OCI-LY7 (cell line): ENCODE measurements at regions of chr17 and their contacts with region 1.

Region 1: GRCh38 chr17:82781894-82782274 is 30.0 kb downstream of the TBCD start:
- DNase-seq: peak; percentile 92
- H3K4me3 ChIP-seq: no peak overlapping the region
- H3K27ac ChIP-seq: peak overlapping the region; percentile 36
- H3K4me1 ChIP-seq: peaks cover 21% of the 10 kb centered on the region
- CTCF ChIP-seq: peak; percentile 100

Region 2: DNA sequence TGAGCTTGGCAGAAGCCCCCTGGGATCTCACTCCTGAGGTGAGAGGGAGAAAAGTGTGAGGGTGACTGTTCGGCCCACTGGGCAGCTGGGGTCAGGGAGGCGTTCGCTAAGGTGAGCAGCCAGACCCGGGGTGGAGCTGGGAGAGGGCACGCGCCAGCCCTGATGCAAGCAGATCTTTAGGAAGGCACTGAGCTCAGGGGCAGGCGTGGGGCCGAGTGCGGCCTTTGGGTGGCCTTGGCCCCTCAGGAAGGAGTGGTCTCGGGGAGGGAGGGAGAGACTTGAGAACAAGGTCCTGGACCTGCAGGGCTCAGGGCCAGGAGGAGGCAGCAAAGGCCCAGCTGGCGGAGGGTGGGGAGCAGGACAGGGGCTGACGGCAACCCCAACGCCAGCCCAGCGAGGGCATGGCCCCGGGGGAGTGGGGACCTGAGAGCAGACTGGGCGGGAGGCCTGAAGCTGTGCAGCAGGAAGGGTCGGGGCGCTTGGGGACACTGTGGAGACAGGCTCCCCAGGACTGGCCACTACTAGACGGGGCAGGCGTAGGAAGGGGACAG is 119.1 kb before region 1 on chr17:
- CTCF ChIA-PET with region 1: no interaction called
- POLR2A ChIA-PET with region 1: no interaction called
- intact Hi-C with region 1: no loop called
- DNase-seq: no peak
- H3K4me3 ChIP-seq: no peak overlapping the region
- H3K27ac ChIP-seq: no peak overlapping the region
- H3K4me1 ChIP-seq: no peaks in the 10 kb centered on the region
- CTCF ChIP-seq: no peak

Region 3: DNA sequence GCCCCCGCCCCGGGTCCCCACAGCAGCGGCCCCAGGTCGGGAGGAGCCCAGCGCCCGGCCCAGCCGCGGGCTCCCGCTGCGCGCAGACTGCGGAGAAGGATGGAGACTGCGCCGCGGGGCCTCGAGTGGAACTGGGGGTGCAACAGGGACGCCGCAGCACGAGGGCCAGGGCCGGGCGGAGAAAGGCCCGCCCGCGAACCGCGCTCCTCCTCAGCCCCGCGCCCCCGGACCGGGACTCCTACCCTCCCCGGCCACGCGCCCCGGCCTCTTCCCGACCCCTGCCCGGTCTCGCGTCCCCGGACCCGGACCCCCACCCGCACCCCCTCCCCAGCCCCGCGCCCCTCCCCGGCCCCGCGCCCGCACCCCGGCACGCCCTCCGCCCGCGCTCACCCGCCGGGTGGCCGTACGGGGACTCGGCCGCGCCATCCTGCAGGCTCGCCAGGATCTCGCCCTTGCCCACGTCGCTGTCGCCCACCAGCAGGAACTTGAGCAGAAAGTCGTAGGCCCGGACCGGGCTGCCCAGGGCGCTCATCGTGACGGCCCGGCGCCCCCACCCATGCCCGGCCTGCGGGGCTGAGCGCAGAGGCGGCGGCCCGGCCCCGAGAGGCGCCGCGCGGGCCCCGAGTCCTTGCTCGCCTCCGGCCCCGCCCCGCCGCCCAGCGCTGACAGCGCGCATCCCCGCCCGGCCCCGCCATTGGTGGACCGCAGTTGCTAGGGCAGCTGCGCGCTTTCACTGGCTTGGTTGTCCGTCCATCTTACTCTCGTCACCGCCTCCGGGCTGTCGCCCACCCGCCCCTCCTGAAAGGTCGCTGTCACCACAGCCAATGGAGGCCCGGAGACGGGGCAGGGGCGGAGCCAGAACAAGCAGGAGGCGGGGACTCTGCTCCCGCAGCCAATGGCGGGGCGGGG is 83.6 kb before region 1 on chr17 and contains the start of gene RAB40B:
- CTCF ChIA-PET with region 1: no interaction called
- POLR2A ChIA-PET with region 1: no interaction called
- intact Hi-C with region 1: no loop called
- DNase-seq: peak; percentile 100
- H3K4me3 ChIP-seq: peak within 1 kb of the TSS; percentile 71
- H3K27ac ChIP-seq: no peak within 1 kb of the TSS
- H3K4me1 ChIP-seq: peaks cover 7% of the 10 kb centered on the region
- CTCF ChIP-seq: no peak
- total RNA-seq, gene RAB40B: 10.1 and 22.1 TPM in 2 replicates

Region 4: GRCh38 chr17:82804442-82805191 is 22.7 kb after region 1 on chr17:
- CTCF ChIA-PET with region 1: no interaction called
- POLR2A ChIA-PET with region 1: no interaction called
- intact Hi-C with region 1: no loop called
- DNase-seq: no peak
- H3K4me3 ChIP-seq: no peak overlapping the region
- H3K27ac ChIP-seq: no peak overlapping the region
- H3K4me1 ChIP-seq: no peaks in the 10 kb centered on the region
- CTCF ChIP-seq: no peak

Region 5: DNA sequence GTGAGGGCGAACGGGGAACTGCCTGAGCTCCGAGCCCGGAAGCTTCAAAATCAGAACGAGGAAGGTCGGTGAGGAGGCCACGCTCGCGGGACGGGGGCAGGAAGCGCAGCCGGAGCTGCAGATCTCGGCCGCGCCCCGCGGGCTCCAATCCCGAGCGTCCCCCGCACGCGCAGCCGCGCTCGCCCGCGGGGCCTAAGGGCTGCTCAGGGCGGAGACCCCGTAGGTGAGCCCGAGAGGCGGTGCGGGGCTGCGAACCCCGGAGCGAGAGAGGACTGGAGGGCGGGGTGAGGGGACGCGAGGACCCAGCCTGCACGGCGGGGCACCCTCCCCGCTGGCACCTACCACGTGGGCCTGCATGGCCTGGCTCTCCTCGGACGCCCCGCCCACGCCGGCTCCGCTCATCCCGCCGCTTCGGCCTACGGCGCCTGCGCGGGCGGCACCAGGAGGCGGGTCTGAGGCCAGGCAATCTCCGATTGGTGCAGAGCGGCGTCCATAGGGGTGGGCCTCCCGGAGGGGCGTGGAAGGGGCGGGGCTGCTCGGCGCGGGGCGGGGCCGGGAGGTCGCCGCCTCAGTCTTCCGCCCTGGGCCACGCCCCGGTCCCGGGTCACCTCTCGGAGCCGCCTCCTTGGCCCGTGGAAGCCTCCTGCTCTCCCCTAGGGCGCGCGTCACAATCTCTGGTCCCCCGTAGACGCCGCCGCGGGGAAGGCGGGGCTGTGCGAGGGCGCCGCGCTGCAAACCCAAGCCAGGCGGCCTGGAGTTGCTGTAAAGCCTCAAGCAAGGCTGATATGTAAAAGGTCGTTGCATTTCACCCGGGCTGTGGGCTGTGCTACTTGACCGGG is 269.7 kb after region 1 on chr17:
- CTCF ChIA-PET with region 1: no interaction called
- POLR2A ChIA-PET with region 1: no interaction called
- intact Hi-C with region 1: loop called (anchors 1 kb)
- DNase-seq: peak; percentile 99
- H3K4me3 ChIP-seq: peak overlapping the region; percentile 74
- H3K27ac ChIP-seq: peak overlapping the region; percentile 75
- H3K4me1 ChIP-seq: peaks cover 31% of the 10 kb centered on the region
- CTCF ChIP-seq: no peak

Region 6: GRCh38 chr17:83076930-83077329 is 295.0 kb after region 1 on chr17:
- CTCF ChIA-PET with region 1: no interaction called
- POLR2A ChIA-PET with region 1: no interaction called
- intact Hi-C with region 1: loop called (anchors 2 kb)
- DNase-seq: no peak
- H3K4me3 ChIP-seq: no peak overlapping the region
- H3K27ac ChIP-seq: no peak overlapping the region
- H3K4me1 ChIP-seq: peaks cover 24% of the 10 kb centered on the region
- CTCF ChIP-seq: peak; percentile 60